ENCODE measurements at regions of chr6 and their contacts with region 1.

Region 1: GRCh38 chr6:16438718-16439591 is 200.6 kb downstream of the GMPR start:
- DNase-seq: peak in 4 of 14 experiments; percentile 21 to 63 (median 51)
- ATAC-seq: no peak
- H3K4me3 ChIP-seq: no peak overlapping the region
- H3K4me3 Mint-ChIP-seq: no peak overlapping the region
- H3K27ac ChIP-seq: no peak overlapping the region
- H3K27ac Mint-ChIP-seq: peak overlapping the region; percentile 55
- H3K4me1 ChIP-seq: peaks cover 51% of the 10 kb centered on the region
- H3K4me1 Mint-ChIP-seq: peaks cover 67% of the 10 kb centered on the region
- H3K27me3 ChIP-seq: no peaks in the 10 kb centered on the region
- H3K27me3 Mint-ChIP-seq: no peaks in the 10 kb centered on the region
- CTCF ChIP-seq: no peak

Region 2: GRCh38 chr6:15817121-15817520 is 621.8 kb before region 1 on chr6:
- CTCF ChIA-PET with region 1: no interaction called
- POLR2A ChIA-PET with region 1: no interaction called
- intact Hi-C with region 1: no loop called
- DNase-seq: no peak
- ATAC-seq: no peak
- H3K4me3 ChIP-seq: no peak overlapping the region
- H3K4me3 Mint-ChIP-seq: no peak overlapping the region
- H3K27ac ChIP-seq: no peak overlapping the region
- H3K27ac Mint-ChIP-seq: no peak overlapping the region
- H3K4me1 ChIP-seq: no peaks in the 10 kb centered on the region
- H3K4me1 Mint-ChIP-seq: no peaks in the 10 kb centered on the region
- H3K27me3 ChIP-seq: peaks cover 0 to 9% of the 10 kb centered on the region in 2 experiments
- H3K27me3 Mint-ChIP-seq: peaks cover 13% of the 10 kb centered on the region
- CTCF ChIP-seq: no peak

Region 3: DNA sequence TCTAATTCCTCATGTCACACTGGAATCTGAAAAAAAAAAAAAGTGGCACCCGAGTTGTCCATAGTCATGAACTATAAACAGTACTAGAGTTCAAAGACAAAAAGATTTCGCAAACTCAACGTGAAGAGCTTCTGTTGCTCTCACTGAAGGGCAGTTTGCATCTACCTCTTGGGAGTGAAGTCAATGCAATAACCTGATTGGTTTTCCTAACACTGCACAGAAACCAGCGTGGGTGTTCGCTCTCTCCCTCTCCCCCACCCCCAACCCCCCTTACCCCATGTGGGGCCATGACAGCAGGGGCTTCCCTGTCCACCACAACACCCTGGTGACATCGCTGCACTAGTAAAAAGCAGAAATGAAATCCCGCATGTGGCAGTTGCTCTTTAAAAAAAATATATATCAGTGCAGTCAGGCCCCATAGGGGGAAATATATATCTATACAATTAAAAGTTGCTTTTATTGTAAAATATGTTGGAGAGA is 133.7 kb before region 1 on chr6:
- CTCF ChIA-PET with region 1: no interaction called
- POLR2A ChIA-PET with region 1: no interaction called
- intact Hi-C with region 1: no loop called
- DNase-seq: no peak
- ATAC-seq: no peak
- H3K4me3 ChIP-seq: no peak overlapping the region
- H3K4me3 Mint-ChIP-seq: no peak overlapping the region
- H3K27ac ChIP-seq: no peak overlapping the region
- H3K27ac Mint-ChIP-seq: no peak overlapping the region
- H3K4me1 ChIP-seq: no peaks in the 10 kb centered on the region
- H3K4me1 Mint-ChIP-seq: no peaks in the 10 kb centered on the region
- H3K27me3 ChIP-seq: no peaks in the 10 kb centered on the region
- H3K27me3 Mint-ChIP-seq: no peaks in the 10 kb centered on the region
- CTCF ChIP-seq: no peak

Region 4: GRCh38 chr6:16420715-16421461 is 18.1 kb before region 1 on chr6:
- CTCF ChIA-PET with region 1: interaction called, 4 read pairs
- POLR2A ChIA-PET with region 1: interaction called, 3 read pairs
- intact Hi-C with region 1: loop called in 1 of 2 experiments (anchors 2 kb)
- DNase-seq: peak in 7 of 14 experiments; percentile 33 to 85 (median 38)
- ATAC-seq: peak; percentile 78
- H3K4me3 ChIP-seq: peak overlapping the region; percentile 30
- H3K4me3 Mint-ChIP-seq: peak overlapping the region; percentile 59
- H3K27ac ChIP-seq: peak overlapping the region; percentile 62 to 84
- H3K27ac Mint-ChIP-seq: peak overlapping the region; percentile 96
- H3K4me1 ChIP-seq: peaks cover 37% of the 10 kb centered on the region
- H3K4me1 Mint-ChIP-seq: peaks cover 42% of the 10 kb centered on the region
- H3K27me3 ChIP-seq: no peaks in the 10 kb centered on the region
- H3K27me3 Mint-ChIP-seq: no peaks in the 10 kb centered on the region
- CTCF ChIP-seq: no peak

Region 5: GRCh38 chr6:16471222-16471909 is 32.4 kb after region 1 on chr6:
- CTCF ChIA-PET with region 1: interaction called, 3 read pairs
- POLR2A ChIA-PET with region 1: no interaction called
- intact Hi-C with region 1: loop called in 1 of 2 experiments (anchors 5 kb)
- DNase-seq: peak in 2 of 14 experiments; percentile 33 to 49
- ATAC-seq: no peak
- H3K4me3 ChIP-seq: no peak overlapping the region
- H3K4me3 Mint-ChIP-seq: no peak overlapping the region
- H3K27ac ChIP-seq: no peak overlapping the region
- H3K27ac Mint-ChIP-seq: peak overlapping the region; percentile 56
- H3K4me1 ChIP-seq: peaks cover 34% of the 10 kb centered on the region
- H3K4me1 Mint-ChIP-seq: peaks cover 67% of the 10 kb centered on the region
- H3K27me3 ChIP-seq: no peaks in the 10 kb centered on the region
- H3K27me3 Mint-ChIP-seq: no peaks in the 10 kb centered on the region
- CTCF ChIP-seq: no peak

Measured in CD4-positive, alpha-beta T cell (primary cell).